Lower leg skin (tissue), 4 donors: ENCODE measurements at regions of chr5 and their contacts with region 1.

Region 1: GRCh38 chr5:82522897-82523296 is 244.7 kb upstream of the RPS23 start:
- DNase-seq: no peak
- H3K4me3 ChIP-seq: no peak overlapping the region
- CTCF ChIP-seq: no peak
- POLR2A ChIP-seq: no peak

Region 2: DNA sequence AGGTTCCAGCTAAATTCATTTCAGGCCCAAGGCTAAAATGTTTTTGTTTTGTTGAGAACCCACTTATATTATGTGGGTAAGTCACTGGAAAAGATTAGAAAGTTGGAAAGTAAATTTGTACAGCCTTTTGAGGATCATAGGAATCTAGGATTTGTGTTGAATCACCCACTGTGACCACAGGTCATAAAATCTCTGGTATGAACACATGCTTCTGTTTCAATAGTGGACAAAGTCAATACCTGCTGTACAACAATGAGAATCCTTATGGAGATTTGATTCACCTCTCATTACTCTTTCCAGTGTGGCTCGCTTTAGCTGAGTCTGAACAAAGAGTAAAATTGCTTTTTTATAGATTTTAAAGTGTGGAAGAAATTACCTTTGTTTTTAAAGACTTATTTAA is 184.8 kb after region 1 on chr5:
- intact Hi-C with region 1: no loop called
- DNase-seq: no peak
- H3K4me3 ChIP-seq: no peak overlapping the region
- CTCF ChIP-seq: no peak
- POLR2A ChIP-seq: no peak

Region 3: DNA sequence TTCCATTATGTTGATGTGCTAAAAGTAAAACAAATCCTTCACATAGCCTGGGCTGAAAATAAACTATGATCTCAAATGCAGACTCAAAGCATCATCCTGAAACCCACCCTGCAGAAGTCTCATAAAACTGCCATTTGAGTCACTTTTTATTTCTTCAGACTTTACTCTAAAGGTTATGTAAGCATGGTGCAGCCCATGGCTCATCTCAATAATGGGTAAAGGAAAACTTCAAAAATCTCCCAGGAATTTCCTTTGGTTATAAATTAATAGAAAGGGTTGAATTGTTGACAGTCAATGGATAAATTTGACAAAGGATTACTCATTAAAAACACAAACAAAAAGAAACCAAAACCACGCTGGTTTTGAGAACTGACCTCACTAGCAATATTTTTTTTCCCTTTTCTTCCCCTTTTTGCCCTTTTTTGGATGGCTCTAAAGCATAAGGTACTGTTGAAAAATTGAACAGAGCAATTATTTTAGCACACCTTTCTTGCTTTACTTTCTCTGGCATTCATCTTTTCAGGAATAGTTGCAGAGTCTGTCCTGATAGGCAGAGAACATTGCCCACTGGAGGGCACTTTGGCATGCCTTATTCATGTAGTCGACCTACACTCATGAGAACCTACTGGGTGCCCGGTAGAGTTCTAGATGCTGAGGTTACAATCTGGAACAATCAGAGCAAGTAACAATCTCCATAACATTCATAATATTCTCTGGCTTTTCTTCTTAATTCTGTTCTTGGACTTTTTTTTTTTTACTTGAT is 362.9 kb after region 1 on chr5:
- intact Hi-C with region 1: no loop called
- DNase-seq: no peak
- H3K4me3 ChIP-seq: no peak overlapping the region
- CTCF ChIP-seq: no peak
- POLR2A ChIP-seq: no peak

Region 4: DNA sequence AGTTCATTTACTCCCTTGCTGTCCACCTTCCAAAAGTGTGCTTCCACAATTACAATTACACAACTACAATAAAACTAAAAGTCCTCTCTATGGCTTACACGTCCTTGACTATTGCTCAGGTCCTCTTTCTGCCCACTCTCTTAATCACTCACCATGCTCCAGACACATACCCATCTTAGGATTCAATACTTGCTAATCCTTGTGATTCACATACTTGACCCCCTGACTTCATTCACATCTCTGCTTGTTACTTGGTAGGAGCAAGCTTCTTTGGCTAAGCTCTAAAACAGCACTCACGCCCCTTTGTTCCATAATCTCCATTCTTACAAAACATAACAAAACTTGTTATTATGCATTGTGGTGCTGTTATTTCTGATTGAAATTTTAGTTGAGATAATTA is 1645.9 kb after region 1 on chr5:
- intact Hi-C with region 1: loop called (anchors 10 kb)
- DNase-seq: no peak
- H3K4me3 ChIP-seq: no peak overlapping the region
- CTCF ChIP-seq: no peak
- POLR2A ChIP-seq: no peak